ENCODE measurements at regions of chr7 and their contacts with region 1.

Region 1: GRCh38 chr7:151570366-151570915 is 50.7 kb upstream of the RHEB start:
- DNase-seq: peak in 3 of 9 donors; percentile 2 to 12 (median 7)
- ATAC-seq: no peak
- H3K4me3 ChIP-seq: no peak overlapping the region
- H3K4me3 Mint-ChIP-seq: no peak overlapping the region
- H3K27ac ChIP-seq: no peak overlapping the region
- H3K27ac Mint-ChIP-seq: no peak overlapping the region
- H3K4me1 ChIP-seq: no peaks in the 10 kb centered on the region
- H3K4me1 Mint-ChIP-seq: peaks cover 0 to under 1% (median 0%) of the 10 kb centered on the region in 7 donors
- H3K27me3 ChIP-seq: no peaks in the 10 kb centered on the region
- H3K27me3 Mint-ChIP-seq: no peaks in the 10 kb centered on the region

Region 2: GRCh38 chr7:151524845-151525244 is 45.6 kb before region 1 on chr7:
- CTCF ChIA-PET with region 1: no interaction called
- POLR2A ChIA-PET with region 1: no interaction called
- intact Hi-C with region 1: no loop called
- DNase-seq: no peak
- ATAC-seq: no peak
- H3K4me3 ChIP-seq: no peak overlapping the region
- H3K4me3 Mint-ChIP-seq: no peak overlapping the region
- H3K27ac ChIP-seq: no peak overlapping the region
- H3K27ac Mint-ChIP-seq: no peak overlapping the region
- H3K4me1 ChIP-seq: peaks cover 7 to 8% of the 10 kb centered on the region in 2 donors
- H3K4me1 Mint-ChIP-seq: peaks cover 0 to 9% (median 3%) of the 10 kb centered on the region in 7 donors
- H3K27me3 ChIP-seq: no peaks in the 10 kb centered on the region
- H3K27me3 Mint-ChIP-seq: peaks cover 0 to 15% (median 0%) of the 10 kb centered on the region in 5 donors

Region 3: GRCh38 chr7:151705636-151706276 is 135.3 kb after region 1 on chr7:
- CTCF ChIA-PET with region 1: no interaction called
- POLR2A ChIA-PET with region 1: no interaction called
- intact Hi-C with region 1: loop called in 1 of 2 experiments (anchors 1 kb)
- DNase-seq: peak in 4 of 9 donors; percentile 6 to 21 (median 10)
- ATAC-seq: peak; percentile 56
- H3K4me3 ChIP-seq: no peak overlapping the region
- H3K4me3 Mint-ChIP-seq: peak overlapping the region in 3 of 10 donors; percentile 4 to 19 (median 12)
- H3K27ac ChIP-seq: no peak overlapping the region
- H3K27ac Mint-ChIP-seq: peak overlapping the region in 3 of 9 donors; percentile 20 to 58 (median 29)
- H3K4me1 ChIP-seq: no peaks in the 10 kb centered on the region
- H3K4me1 Mint-ChIP-seq: peaks cover 4 to 26% (median 19%) of the 10 kb centered on the region in 7 donors
- H3K27me3 ChIP-seq: no peaks in the 10 kb centered on the region
- H3K27me3 Mint-ChIP-seq: no peaks in the 10 kb centered on the region

Region 4: DNA sequence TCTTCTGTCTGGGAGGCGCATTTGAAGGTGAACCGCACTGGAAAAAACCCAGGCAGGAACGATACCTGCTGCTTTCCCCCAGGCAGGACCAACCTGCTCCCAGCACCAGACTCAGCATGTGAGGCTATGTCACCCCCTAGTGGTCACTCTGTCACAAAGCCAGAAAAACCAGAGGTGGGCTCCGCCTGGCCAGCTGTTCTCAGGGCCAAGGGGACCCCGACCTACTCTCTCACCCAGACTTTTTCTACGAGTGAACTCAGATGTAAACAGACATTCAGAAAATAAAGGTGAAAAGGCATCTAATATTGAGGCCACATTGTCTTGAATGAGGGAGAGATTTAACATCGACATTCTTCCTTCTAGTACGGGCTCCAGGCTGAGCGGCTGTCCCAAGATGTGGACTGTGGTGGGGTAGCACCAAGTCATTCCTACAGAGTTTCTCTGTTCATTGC is 189.2 kb after region 1 on chr7:
- CTCF ChIA-PET with region 1: no interaction called
- POLR2A ChIA-PET with region 1: no interaction called
- intact Hi-C with region 1: loop called (anchors 1 kb)
- DNase-seq: peak in 8 of 9 donors; percentile 38 to 67 (median 58)
- ATAC-seq: peak; percentile 67
- H3K4me3 ChIP-seq: no peak overlapping the region
- H3K4me3 Mint-ChIP-seq: no peak overlapping the region
- H3K27ac ChIP-seq: no peak overlapping the region
- H3K27ac Mint-ChIP-seq: peak overlapping the region in 6 of 9 donors; percentile 8 to 83 (median 56)
- H3K4me1 ChIP-seq: peaks cover 12 to 22% of the 10 kb centered on the region in 2 donors
- H3K4me1 Mint-ChIP-seq: peaks cover 17 to 60% (median 33%) of the 10 kb centered on the region in 7 donors
- H3K27me3 ChIP-seq: no peaks in the 10 kb centered on the region
- H3K27me3 Mint-ChIP-seq: no peaks in the 10 kb centered on the region

Region 5: DNA sequence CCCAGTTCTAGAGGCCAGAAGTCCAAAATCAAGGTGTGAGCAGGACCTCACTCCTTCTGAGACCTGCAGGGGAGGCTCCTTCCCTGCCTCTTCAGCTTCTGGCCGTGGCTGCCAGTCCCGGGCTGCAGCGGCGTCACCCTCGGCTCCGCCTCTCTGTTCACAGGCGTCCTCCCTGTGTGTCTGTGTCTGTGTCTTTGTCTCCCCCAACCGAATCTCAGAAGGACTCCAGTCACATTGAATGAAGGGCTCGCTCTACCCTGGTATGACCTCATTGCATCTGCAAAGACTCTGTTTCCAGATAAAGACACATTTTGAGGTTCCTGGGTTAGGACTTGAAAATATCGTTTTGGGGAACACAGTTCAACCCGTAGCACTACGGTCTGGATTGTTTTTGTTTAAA is 421.9 kb after region 1 on chr7:
- CTCF ChIA-PET with region 1: no interaction called
- POLR2A ChIA-PET with region 1: no interaction called
- intact Hi-C with region 1: loop called in 1 of 2 experiments (anchors 10 kb)
- DNase-seq: peak in 8 of 9 donors; percentile 14 to 54 (median 44)
- ATAC-seq: peak; percentile 96
- H3K4me3 ChIP-seq: no peak overlapping the region
- H3K4me3 Mint-ChIP-seq: peak overlapping the region in 3 of 10 donors; percentile 3 to 25 (median 18)
- H3K27ac ChIP-seq: no peak overlapping the region
- H3K27ac Mint-ChIP-seq: peak overlapping the region in 2 of 9 donors; percentile 27 to 55
- H3K4me1 ChIP-seq: no peaks in the 10 kb centered on the region
- H3K4me1 Mint-ChIP-seq: peaks cover 0 to 10% (median 7%) of the 10 kb centered on the region in 7 donors
- H3K27me3 ChIP-seq: no peaks in the 10 kb centered on the region
- H3K27me3 Mint-ChIP-seq: peaks cover 14 to 41% (median 30%) of the 10 kb centered on the region in 5 donors